BJ (cell line): ENCODE measurements at regions of chr19 and their contacts with region 1.

Region 1: GRCh38 chr19:56080669-56081401 is 40.3 kb downstream of the ZNF787 start:
- DNase-seq: no peak
- H3K4me3 ChIP-seq: peak overlapping the region; percentile 46
- H3K27me3 ChIP-seq: no peaks in the 10 kb centered on the region
- CTCF ChIP-seq: peak; percentile 72

Region 2: DNA sequence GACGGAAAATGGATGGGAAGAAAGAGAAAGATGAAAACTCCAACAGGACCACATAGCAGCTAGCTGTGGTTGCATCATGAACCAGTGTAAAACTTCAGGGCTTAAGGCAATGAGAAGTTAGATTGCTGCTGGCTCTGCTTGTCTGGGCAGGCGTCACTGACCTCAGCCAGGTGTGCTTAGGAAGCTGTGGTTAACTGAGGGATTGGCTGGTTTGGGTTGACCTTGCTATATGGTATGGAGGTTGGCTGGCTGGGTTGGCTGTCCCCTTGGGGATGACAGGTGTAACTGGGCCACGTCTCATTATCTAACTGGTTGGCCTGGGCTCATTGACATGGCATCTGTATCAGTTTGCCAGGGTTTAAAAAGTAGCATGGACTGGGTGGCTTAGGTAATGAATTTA is 203.6 kb before region 1 on chr19:
- CTCF ChIA-PET with region 1: no interaction called
- POLR2A ChIA-PET with region 1: no interaction called
- DNase-seq: no peak
- H3K4me3 ChIP-seq: no peak overlapping the region
- H3K27me3 ChIP-seq: no peaks in the 10 kb centered on the region
- CTCF ChIP-seq: no peak

Region 3: DNA sequence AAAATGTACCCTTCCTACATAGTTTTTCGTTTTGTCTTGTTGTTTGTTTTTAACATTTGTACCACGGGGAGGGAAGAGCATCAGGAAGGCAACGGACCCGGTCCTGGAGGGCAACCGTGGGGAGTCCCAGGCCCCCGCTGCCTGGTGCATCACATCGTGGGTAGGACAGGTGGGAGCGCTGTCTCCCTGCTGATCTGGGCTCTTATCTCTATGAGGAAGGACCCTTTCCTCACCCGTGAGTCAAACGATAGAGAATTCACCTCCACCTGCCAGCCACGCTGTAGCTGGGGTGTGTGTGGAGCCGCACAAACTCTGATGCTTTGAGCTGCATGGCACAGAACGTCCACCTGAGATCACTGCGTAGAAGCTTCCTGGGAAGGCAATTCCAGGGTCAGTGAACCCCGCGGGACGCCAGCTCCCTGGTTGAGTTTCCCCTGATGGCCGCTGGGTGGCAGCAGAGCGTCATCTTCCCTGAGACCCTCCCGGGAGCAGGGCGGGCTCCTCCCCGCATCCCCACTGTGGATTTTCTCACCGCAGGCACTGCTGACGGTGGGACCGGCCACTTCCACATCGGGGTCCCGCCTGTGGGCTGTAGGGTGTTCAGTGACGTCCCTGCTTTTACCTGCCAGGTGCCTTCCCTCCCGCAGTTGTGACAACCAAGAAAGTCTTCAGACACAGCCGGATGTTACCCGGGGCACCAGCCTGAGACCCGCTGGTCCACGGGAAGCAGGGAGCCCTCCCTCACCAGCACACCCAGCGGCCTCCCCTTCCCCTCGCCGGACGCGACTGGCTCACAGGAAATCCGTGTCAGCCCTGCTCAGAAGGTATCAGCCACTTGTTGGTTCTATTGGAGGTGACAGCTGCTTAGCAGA is 14.4 kb before region 1 on chr19:
- CTCF ChIA-PET with region 1: interaction called, 44 read pairs
- POLR2A ChIA-PET with region 1: no interaction called
- DNase-seq: no peak
- H3K4me3 ChIP-seq: 0 out of 2 replicates have a peak overlapping the region, but pooled peaks have one; percentile 25
- H3K27me3 ChIP-seq: no peaks in the 10 kb centered on the region; the same call in 1 of the 2 replicates
- CTCF ChIP-seq: peak; percentile 88

Region 4: DNA sequence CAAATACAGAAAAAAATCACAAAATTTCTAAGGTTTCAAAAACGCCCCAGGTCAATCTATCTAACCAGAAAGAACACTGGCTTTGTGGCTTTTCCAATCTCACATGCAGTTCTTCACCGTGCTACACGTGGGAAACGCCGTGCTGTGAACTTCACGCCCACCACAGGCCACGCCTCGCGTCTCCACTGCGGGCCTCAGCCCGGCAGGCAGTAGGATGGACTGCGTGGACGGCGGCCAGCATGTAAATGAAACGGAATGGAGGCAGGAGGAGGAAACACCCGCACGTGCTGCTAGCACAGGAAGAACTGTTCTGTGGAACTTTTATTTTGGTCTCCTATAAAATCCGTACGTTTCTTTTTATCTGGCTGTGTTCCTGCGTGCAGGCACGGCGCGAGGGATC is 16.5 kb after region 1 on chr19:
- CTCF ChIA-PET with region 1: interaction called, 10 read pairs
- POLR2A ChIA-PET with region 1: no interaction called
- DNase-seq: no peak
- H3K4me3 ChIP-seq: no peak overlapping the region
- H3K27me3 ChIP-seq: no peaks in the 10 kb centered on the region
- CTCF ChIP-seq: no peak

Region 5: GRCh38 chr19:56170261-56170660 is 89.4 kb after region 1 on chr19:
- CTCF ChIA-PET with region 1: interaction called, 262 read pairs
- POLR2A ChIA-PET with region 1: no interaction called
- DNase-seq: no peak
- H3K4me3 ChIP-seq: no peak overlapping the region
- H3K27me3 ChIP-seq: no peaks in the 10 kb centered on the region
- CTCF ChIP-seq: no peak

Region 6: DNA sequence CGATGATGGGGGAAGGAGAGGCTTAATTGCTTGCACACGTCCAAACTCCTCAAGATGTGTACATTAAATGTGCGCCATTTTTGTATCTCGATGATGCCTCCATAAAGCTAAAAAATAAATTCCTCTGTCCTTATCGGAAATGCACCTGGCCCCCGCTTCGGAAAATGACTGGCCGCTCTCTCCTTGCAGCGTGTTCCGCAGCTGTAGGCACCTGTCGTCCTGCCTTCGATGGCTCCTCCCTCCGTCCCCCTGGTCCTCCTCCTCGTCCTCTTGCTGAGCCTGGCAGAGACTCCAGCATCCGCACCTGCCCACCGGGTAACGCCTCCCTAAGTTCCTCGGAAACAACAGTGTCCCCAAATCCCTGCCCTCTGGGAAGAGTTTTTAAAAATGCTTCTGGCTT is 96.0 kb after region 1 on chr19:
- CTCF ChIA-PET with region 1: interaction called, 262 read pairs
- POLR2A ChIA-PET with region 1: no interaction called
- DNase-seq: no peak
- H3K4me3 ChIP-seq: no peak overlapping the region
- H3K27me3 ChIP-seq: no peaks in the 10 kb centered on the region
- CTCF ChIP-seq: no peak

Region 7: GRCh38 chr19:56252699-56253422 is 172.0 kb after region 1 on chr19:
- CTCF ChIA-PET with region 1: interaction called, 122 read pairs
- POLR2A ChIA-PET with region 1: no interaction called
- DNase-seq: no peak
- H3K4me3 ChIP-seq: no peak overlapping the region
- H3K27me3 ChIP-seq: no peaks in the 10 kb centered on the region
- CTCF ChIP-seq: peak; percentile 97

Region 8: GRCh38 chr19:56333505-56333904 is 252.7 kb after region 1 on chr19:
- CTCF ChIA-PET with region 1: interaction called, 24 read pairs
- POLR2A ChIA-PET with region 1: no interaction called
- DNase-seq: no peak
- H3K4me3 ChIP-seq: no peak overlapping the region
- H3K27me3 ChIP-seq: no peaks in the 10 kb centered on the region
- CTCF ChIP-seq: peak; percentile 76